ENCODE measurements at regions of chr2 and their contacts with region 1.

Region 1: DNA sequence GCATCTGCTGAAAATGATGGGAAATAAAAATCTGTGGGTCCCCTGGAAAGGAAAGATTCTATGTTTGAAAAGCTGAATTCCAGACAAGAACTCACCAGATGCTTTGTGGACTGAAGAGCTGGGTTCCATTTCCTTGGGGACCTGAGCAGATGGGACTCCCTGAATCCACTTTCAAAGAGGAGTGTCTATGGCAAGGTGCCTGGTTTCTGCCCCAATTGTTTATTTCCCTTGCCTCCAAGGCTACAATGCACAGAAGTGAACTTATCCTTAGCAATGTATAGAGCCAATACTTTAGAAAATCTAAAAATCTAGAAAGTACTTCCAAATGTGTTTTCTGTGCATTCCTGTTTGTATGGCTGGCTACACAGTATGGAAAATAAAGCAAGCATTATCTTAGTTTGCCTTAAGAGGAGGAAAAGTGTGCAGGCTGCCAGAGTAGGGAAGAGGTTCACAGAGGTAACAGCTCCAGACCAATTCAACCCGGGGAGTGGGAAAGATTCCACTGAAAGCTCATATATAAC is 420.5 kb downstream of the NRXN1 start:
- DNase-seq: no peak
- ATAC-seq: no peak
- H3K4me3 ChIP-seq: no peak overlapping the region
- H3K27ac ChIP-seq: no peak overlapping the region
- H3K4me1 ChIP-seq: peaks cover 3% of the 10 kb centered on the region; the same call in 1 of the 2 replicates
- H3K27me3 ChIP-seq: no peaks in the 10 kb centered on the region
- CTCF ChIP-seq: no peak
- POLR2A ChIP-seq: no peak
- RAD21 ChIP-seq: no peak

Region 2: GRCh38 chr2:50431958-50432650 is 179.3 kb before region 1 on chr2:
- CTCF ChIA-PET with region 1: no interaction called
- POLR2A ChIA-PET with region 1: no interaction called
- dilution Hi-C with region 1: no loop called
- in situ Hi-C with region 1: no loop called
- intact Hi-C with region 1: no loop called
- DNase-seq: no peak
- ATAC-seq: no peak
- H3K4me3 ChIP-seq: no peak overlapping the region
- H3K27ac ChIP-seq: no peak overlapping the region
- H3K4me1 ChIP-seq: no peaks in the 10 kb centered on the region
- H3K27me3 ChIP-seq: no peaks in the 10 kb centered on the region
- CTCF ChIP-seq: no peak
- POLR2A ChIP-seq: no peak
- RAD21 ChIP-seq: no peak

Region 3: DNA sequence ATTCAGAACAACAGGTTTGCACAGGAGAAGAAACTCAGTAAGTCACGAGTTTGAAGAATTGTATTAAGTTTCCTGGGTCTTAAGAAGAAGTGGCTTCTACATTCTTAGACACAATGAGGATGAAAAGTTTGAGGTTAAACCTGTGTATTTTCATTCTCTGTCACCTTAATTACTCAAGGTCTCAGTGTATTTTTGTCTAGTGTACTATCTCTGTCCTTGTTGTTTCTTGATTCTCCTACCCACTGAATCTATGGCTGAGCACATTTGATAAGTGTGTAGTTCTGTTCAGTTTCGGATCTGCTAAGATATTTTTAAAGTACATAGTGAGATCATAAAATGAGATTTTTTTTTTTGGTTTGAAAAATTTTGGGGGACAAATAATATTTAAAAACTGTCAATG is 40.1 kb before region 1 on chr2:
- CTCF ChIA-PET with region 1: no interaction called
- POLR2A ChIA-PET with region 1: no interaction called
- dilution Hi-C with region 1: no loop called
- in situ Hi-C with region 1: no loop called
- intact Hi-C with region 1: loop called (anchors 5 kb)
- DNase-seq: no peak
- ATAC-seq: no peak
- H3K4me3 ChIP-seq: no peak overlapping the region
- H3K27ac ChIP-seq: no peak overlapping the region
- H3K4me1 ChIP-seq: no peaks in the 10 kb centered on the region; the same call in 1 of the 2 replicates
- H3K27me3 ChIP-seq: peaks cover 2% of the 10 kb centered on the region; the same call in 1 of the 2 replicates
- CTCF ChIP-seq: no peak
- POLR2A ChIP-seq: no peak
- RAD21 ChIP-seq: no peak

Region 4: DNA sequence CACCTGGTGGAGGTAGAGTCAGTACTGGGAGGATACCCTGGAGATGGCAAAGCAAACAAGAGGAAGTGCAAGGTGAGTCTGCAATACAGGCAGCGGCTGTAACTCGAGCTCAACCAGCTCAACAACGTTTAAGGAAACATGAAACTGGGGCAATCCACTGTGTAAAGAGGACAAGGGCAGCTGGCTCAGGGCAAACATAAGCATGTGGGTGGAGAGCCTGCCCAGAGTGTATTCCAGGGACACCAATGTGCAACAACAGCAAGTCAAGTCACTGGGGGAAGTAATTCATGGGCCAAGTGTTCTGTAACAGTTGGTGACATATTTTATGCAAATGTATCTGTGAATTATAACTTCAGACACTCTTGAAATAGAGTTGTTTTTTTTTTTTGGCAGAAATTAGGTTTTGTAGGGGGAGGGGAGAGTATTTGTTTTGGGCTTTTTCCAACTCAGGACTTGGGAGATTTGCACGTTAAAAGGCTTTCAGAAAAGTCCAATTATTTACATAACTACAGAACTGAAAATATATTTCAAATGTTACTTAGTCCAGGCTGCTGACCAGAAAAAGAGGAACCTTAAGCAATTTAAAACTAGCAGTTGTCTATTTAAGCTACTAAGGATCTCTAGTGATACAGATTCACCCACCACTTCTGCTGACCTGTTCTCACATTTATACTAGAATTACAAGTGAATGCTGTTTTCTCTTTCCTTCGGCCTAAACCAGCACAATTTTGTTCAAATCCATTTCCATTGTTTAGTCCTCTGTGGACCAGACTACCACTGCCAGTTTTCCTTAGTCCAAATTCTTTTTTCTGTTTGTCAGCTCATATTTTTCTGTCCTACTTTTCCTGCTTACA is 401.9 kb after region 1 on chr2:
- CTCF ChIA-PET with region 1: no interaction called
- POLR2A ChIA-PET with region 1: no interaction called
- dilution Hi-C with region 1: no loop called
- in situ Hi-C with region 1: no loop called
- intact Hi-C with region 1: no loop called
- DNase-seq: peak; percentile 12
- ATAC-seq: peak; percentile 66
- H3K4me3 ChIP-seq: no peak overlapping the region
- H3K27ac ChIP-seq: no peak overlapping the region
- H3K4me1 ChIP-seq: peaks cover 2% of the 10 kb centered on the region; the same call in 1 of the 2 replicates
- H3K27me3 ChIP-seq: no peaks in the 10 kb centered on the region
- CTCF ChIP-seq: no peak
- POLR2A ChIP-seq: no peak
- RAD21 ChIP-seq: no peak

Measured in IMR-90 (cell line).